IMR-90 (cell line): ENCODE measurements at regions of chr7 and their contacts with region 1.

Region 1: GRCh38 chr7:6516387-6516983 is 34.8 kb downstream of the GRID2IP start:
- DNase-seq: peak; percentile 79
- ATAC-seq: peak; percentile 96
- H3K4me3 ChIP-seq: no peak overlapping the region
- H3K27ac ChIP-seq: no peak overlapping the region
- H3K4me1 ChIP-seq: no peaks in the 10 kb centered on the region
- H3K27me3 ChIP-seq: no peaks in the 10 kb centered on the region; the same call in 1 of the 2 replicates
- CTCF ChIP-seq: peak; percentile 89
- POLR2A ChIP-seq: no peak
- RAD21 ChIP-seq: peak; percentile 88

Region 2: GRCh38 chr7:6558837-6559236 is 42.4 kb after region 1 on chr7:
- CTCF ChIA-PET with region 1: no interaction called
- POLR2A ChIA-PET with region 1: no interaction called
- dilution Hi-C with region 1: no loop called
- in situ Hi-C with region 1: no loop called
- intact Hi-C with region 1: loop called (anchors 2 kb)
- DNase-seq: peak; percentile 21
- ATAC-seq: peak; percentile 63
- H3K4me3 ChIP-seq: no peak overlapping the region
- H3K27ac ChIP-seq: no peak overlapping the region
- H3K4me1 ChIP-seq: no peaks in the 10 kb centered on the region
- H3K27me3 ChIP-seq: peaks cover 2% of the 10 kb centered on the region; the same call in 1 of the 2 replicates
- CTCF ChIP-seq: 0 out of 2 replicates have a peak, but pooled peaks have one; percentile 27
- POLR2A ChIP-seq: no peak
- RAD21 ChIP-seq: peak; percentile 15; the same call in 1 of the 2 replicates

Region 3: GRCh38 chr7:6571160-6571779 is 54.8 kb after region 1 on chr7:
- CTCF ChIA-PET with region 1: interaction called, 4 read pairs
- POLR2A ChIA-PET with region 1: no interaction called
- dilution Hi-C with region 1: no loop called
- in situ Hi-C with region 1: no loop called
- intact Hi-C with region 1: loop called (anchors 5 kb)
- DNase-seq: no peak
- ATAC-seq: no peak
- H3K4me3 ChIP-seq: no peak overlapping the region
- H3K27ac ChIP-seq: no peak overlapping the region
- H3K4me1 ChIP-seq: no peaks in the 10 kb centered on the region
- H3K27me3 ChIP-seq: no peaks in the 10 kb centered on the region
- CTCF ChIP-seq: no peak
- POLR2A ChIP-seq: no peak
- RAD21 ChIP-seq: no peak